ENCODE measurements at regions of chr2 and their contacts with region 1.

Region 1: GRCh38 chr2:85707304-85707703 is 13.1 kb downstream of the GNLY start:
- DNase-seq: peak; percentile 81
- H3K4me3 ChIP-seq: no peak overlapping the region
- CTCF ChIP-seq: peak; percentile 90

Region 2: GRCh38 chr2:85602476-85603234 is 104.6 kb before region 1 on chr2 and contains the start of gene TMEM150A:
- in situ Hi-C with region 1: loop called (anchors 5 kb)
- DNase-seq: peak; percentile 63
- H3K4me3 ChIP-seq: peak within 1 kb of the TSS; percentile 82
- CTCF ChIP-seq: peak; percentile 13

Region 3: GRCh38 chr2:85655961-85656417 is 51.3 kb before region 1 on chr2:
- in situ Hi-C with region 1: loop called (anchors 5 kb)
- DNase-seq: no peak
- H3K4me3 ChIP-seq: no peak overlapping the region
- CTCF ChIP-seq: no peak

Region 4: DNA sequence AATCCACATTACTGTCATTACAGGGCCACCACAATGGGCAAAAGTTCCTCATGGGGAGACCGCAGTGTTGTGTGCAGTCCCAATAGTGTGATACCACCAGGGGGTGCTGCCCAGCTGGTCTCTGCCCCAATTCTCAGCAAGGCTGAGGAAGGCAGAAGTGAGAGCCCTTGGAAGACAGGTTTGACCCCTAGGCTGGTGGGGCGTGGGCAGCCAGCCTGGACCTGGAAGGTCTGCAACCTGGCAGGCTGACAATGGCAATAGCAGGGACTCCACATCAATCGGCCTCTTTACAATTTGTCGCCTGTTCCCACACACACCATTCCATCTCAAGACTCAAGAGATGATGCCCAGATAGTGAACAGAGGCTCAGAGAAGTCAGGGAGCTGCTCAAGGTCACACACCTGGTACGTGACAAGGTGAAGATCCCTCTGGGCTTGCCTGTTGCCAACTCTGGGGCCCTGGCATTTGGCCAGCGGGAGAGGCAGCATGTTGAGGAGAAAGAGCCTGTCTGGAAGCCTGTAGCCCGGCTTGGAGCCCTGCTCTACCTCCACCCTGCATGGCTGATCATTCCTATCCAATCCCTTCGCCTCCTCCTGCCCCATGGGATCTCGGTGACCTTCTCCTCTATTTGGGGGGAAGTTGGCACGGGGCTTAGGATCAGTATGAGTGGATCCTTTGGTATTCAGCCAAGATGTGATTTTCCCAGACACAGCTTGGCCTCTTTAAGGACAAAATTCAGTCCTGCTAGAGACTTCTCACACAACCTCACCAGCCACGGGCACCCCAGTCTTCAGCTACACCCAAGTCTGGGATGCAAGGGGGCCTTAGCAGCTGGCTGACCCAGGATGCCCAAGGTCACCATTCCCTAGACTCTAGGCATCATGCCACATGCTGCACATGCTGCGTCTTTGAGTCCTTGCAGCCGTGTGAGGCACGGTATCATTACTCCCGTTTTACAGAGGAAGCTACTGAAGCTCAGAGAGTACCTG is 43.6 kb after region 1 on chr2:
- in situ Hi-C with region 1: loop called (anchors 5 kb)
- DNase-seq: no peak
- H3K4me3 ChIP-seq: no peak overlapping the region
- CTCF ChIP-seq: peak; percentile 91

Region 5: DNA sequence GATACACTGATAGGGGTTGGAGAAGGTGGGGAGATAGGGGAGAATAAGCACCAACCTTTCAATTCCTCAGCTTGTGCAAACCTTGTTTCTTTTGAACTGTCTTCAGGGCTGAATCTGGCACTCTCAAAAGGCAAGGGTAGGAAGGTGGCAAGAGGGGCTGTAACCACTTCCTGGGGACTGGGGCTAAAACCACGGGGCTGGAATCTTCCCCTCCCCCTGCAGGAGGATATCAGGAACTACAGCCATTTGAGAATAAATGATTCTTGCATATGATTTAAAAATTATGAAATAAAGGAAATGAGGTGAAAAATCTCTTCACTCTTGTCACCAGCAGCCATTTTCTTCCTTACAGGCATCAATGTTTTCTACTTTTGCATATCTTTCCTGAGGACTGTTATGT is 97.3 kb after region 1 on chr2:
- in situ Hi-C with region 1: loop called (anchors 5 kb)
- DNase-seq: no peak
- H3K4me3 ChIP-seq: no peak overlapping the region
- CTCF ChIP-seq: peak; percentile 66

Region 6: GRCh38 chr2:86079981-86080911 is 372.9 kb after region 1 on chr2:
- in situ Hi-C with region 1: loop called (anchors 25 kb)
- DNase-seq: no peak
- H3K4me3 ChIP-seq: no peak overlapping the region
- CTCF ChIP-seq: peak; percentile 84